Panc1 (cell line): ENCODE measurements at regions of chr7 and their contacts with region 1.

Region 1: GRCh38 chr7:111647881-111648280 is 85.6 kb upstream of the IMMP2L start:
- DNase-seq: no peak
- ATAC-seq: no peak
- H3K4me3 ChIP-seq: no peak overlapping the region
- H3K27ac ChIP-seq: no peak overlapping the region
- H3K4me1 ChIP-seq: peaks cover 7% of the 10 kb centered on the region; the same call in 1 of the 2 replicates
- H3K27me3 ChIP-seq: no peaks in the 10 kb centered on the region
- CTCF ChIP-seq: no peak

Region 2: DNA sequence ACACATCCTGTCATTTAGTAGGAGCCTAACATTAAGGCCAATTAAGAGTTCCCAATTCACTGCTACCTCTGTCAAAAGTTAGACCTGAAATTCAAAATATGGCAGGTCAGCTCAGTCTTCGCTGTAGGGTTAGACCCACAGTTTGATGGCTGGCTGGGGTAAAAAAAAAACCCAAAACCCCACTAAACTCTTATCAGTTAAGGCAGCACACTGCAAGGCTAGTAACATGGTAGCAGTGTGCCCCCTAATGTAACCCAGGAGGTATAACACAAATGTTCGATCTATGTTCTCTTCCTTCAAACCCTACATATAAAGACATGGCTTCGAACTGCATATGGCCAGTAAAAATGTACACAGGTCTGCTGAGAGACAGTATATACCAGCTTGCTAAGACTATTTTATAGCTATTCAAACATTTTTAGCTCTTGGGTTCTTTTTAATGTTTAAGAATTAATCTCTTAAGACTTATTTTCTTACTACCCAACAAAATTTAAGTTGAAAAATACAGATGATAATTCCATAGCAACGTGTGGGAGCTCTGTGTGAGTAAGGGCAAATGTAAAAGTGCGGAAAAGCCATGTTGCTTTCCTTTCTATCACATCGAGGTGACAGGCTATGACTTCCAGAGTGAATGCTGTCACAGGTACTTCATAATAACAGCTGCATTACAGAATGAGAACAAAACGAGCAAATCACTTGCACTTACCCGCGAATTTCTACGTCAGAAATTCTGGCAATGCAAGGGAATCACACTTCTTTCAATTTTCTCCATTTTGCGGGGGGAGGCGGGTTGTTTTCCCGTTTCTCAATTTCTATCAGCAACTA is 82.8 kb after region 1 on chr7:
- CTCF ChIA-PET with region 1: no interaction called
- POLR2A ChIA-PET with region 1: no interaction called
- in situ Hi-C with region 1: no loop called
- intact Hi-C with region 1: loop called (anchors 5 kb)
- DNase-seq: no peak
- ATAC-seq: peak; percentile 70; the same call in 1 of the 2 replicates
- H3K4me3 ChIP-seq: no peak overlapping the region
- H3K27ac ChIP-seq: no peak overlapping the region
- H3K4me1 ChIP-seq: no peaks in the 10 kb centered on the region
- H3K27me3 ChIP-seq: no peaks in the 10 kb centered on the region
- CTCF ChIP-seq: peak; percentile 73